Right ventricle myocardium superior (tissue), 1 donor: ENCODE measurements at regions of chr13 and their contacts with region 1.

Region 1: GRCh38 chr13:49606747-49607648 is 21.3 kb upstream of the ARL11 start:
- DNase-seq: peak; percentile 93
- ATAC-seq: peak; percentile 97

Region 2: DNA sequence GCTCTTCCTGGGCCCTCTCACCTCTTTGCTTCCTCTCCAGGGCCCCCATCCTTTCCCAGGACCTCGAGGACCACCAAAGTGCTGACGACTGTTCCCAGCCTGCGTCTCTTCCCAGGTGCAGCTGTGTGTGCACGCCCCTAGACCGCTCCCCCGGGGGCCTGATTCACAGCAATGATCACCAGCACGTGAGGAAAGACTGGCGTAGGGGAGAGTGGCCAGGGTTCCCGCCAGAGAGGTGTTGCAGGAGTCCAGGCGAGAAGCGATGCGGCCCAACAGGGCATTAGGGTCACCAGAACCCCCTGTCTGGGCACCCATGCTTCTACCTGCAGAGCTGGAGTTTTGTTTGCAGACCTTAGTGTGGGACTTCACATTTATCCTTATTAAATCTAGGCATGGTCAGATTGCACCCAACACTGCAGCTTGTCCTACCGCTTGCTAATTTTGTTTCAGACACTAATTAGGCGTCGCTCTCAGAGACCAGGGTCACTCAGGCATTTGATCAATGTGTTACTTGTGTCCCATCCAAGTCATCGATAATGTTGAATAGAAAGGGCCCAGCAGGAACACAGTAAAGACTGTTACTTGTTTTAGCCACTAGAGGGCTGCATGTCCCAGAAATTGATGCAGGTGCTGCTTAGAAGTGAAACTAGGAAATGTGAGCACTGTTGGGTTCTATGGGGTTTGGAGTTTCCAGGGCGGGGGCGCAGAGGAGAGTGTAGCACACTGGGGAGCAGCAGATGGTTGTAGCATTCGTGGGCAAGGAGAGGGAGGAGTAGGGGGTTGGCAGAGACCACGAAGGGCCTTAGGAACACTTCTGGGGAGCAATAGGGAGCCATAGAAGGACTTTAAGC is 306.0 kb before region 1 on chr13:
- intact Hi-C with region 1: loop called (anchors 2 kb)
- DNase-seq: peak; percentile 60
- ATAC-seq: peak; percentile 77

Region 3: DNA sequence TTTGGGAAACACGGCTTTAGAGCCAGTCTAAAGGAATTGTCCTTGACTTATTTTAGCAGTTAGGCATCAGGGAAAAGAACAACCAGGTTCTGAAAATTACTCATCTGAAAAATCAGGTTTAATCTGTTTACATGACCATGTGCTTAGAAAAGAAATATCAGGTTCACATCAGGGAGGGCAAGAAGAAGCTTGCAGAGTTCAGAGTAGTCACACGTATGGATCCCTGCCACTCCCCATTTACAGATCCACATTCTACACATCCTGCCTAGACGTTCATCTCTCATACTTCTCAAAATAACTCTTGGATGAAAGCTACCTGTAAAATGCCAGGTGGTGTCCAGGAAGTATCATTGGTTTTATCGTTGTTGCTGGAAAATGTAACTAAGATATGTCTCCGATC is 125.2 kb before region 1 on chr13:
- intact Hi-C with region 1: loop called (anchors 10 kb)
- DNase-seq: no peak
- ATAC-seq: no peak